ENCODE measurements at regions of chr14 and their contacts with region 1.

Region 1: GRCh38 chr14:59189786-59190771 is 1.6 kb downstream of the DAAM1 start:
- DNase-seq: peak; percentile 80
- H3K4me3 ChIP-seq: peak overlapping the region; percentile 77 to 85 (median 78)
- H3K27ac ChIP-seq: peak overlapping the region; percentile 72
- H3K4me1 ChIP-seq: peaks cover 13% of the 10 kb centered on the region
- H3K27me3 ChIP-seq: peaks cover 11 to 24% of the 10 kb centered on the region in 2 experiments
- CTCF ChIP-seq: no peak
- POLR2A ChIP-seq: no peak

Region 2: GRCh38 chr14:59126710-59127432 is 63.2 kb before region 1 on chr14:
- CTCF ChIA-PET with region 1: interaction called, 4 read pairs
- POLR2A ChIA-PET with region 1: no interaction called
- dilution Hi-C with region 1: no loop called
- intact Hi-C with region 1: loop called (anchors 2 kb)
- DNase-seq: peak; percentile 64
- H3K4me3 ChIP-seq: no peak overlapping the region
- H3K27ac ChIP-seq: no peak overlapping the region
- H3K4me1 ChIP-seq: no peaks in the 10 kb centered on the region
- H3K27me3 ChIP-seq: peaks cover 5 to 6% of the 10 kb centered on the region in 2 experiments
- CTCF ChIP-seq: peak; percentile 58 to 60
- POLR2A ChIP-seq: no peak

Region 3: DNA sequence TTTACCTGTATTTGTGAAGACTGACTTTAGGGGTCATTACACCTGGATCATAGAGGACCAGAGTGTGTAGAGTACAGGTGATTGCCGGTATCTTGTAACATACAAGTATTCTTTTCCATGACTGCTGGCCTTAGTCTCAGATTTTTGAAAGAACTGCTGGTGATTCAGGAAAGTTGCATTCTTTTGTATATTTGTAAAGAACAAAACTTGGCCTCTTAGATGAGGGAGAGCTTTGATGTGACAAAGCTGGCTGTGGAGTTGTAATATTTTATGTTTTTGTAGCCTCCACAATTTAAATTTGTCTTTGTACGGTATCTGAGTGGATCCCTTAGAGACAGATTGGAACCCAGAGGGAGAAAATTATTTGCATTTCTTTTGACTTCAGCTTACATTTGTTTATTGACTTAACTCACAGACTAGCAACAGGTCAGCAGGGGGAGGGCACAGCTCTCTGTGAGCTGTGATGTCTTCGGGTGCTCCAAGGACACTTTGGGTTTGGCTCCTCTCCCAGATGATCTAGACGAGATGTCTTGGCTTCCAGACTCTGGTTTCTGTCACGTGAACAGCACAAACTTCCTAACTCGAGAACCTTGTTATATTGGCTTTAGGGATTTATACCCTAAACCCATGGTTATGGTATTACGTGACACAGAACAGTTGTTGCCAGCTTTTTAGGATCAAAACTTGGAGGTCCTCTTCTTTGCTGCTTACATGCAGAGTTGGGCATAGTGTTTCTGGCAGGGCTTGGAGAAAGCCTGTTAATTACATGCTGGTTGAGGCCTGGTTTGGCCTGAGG is 64.3 kb after region 1 on chr14:
- CTCF ChIA-PET with region 1: no interaction called
- POLR2A ChIA-PET with region 1: no interaction called
- dilution Hi-C with region 1: no loop called
- intact Hi-C with region 1: loop called (anchors 2 kb)
- DNase-seq: peak; percentile 54
- H3K4me3 ChIP-seq: no peak overlapping the region
- H3K27ac ChIP-seq: peak overlapping the region; percentile 42
- H3K4me1 ChIP-seq: peaks cover 18% of the 10 kb centered on the region
- H3K27me3 ChIP-seq: no peaks in the 10 kb centered on the region
- CTCF ChIP-seq: no peak
- POLR2A ChIP-seq: no peak

Region 4: GRCh38 chr14:59337141-59337611 is 147.1 kb after region 1 on chr14:
- CTCF ChIA-PET with region 1: interaction called, 3 read pairs
- POLR2A ChIA-PET with region 1: no interaction called
- dilution Hi-C with region 1: no loop called
- intact Hi-C with region 1: loop called (anchors 2 kb)
- DNase-seq: peak; percentile 70
- H3K4me3 ChIP-seq: no peak overlapping the region
- H3K27ac ChIP-seq: peak overlapping the region; percentile 87
- H3K4me1 ChIP-seq: peaks cover 61% of the 10 kb centered on the region
- H3K27me3 ChIP-seq: no peaks in the 10 kb centered on the region
- CTCF ChIP-seq: no peak
- POLR2A ChIP-seq: no peak

Region 5: GRCh38 chr14:59428581-59429012 is 238.5 kb after region 1 on chr14:
- CTCF ChIA-PET with region 1: interaction called, 18 read pairs
- POLR2A ChIA-PET with region 1: no interaction called
- dilution Hi-C with region 1: no loop called
- intact Hi-C with region 1: no loop called
- DNase-seq: peak; percentile 53
- H3K4me3 ChIP-seq: no peak overlapping the region
- H3K27ac ChIP-seq: no peak overlapping the region
- H3K4me1 ChIP-seq: peaks cover 11% of the 10 kb centered on the region
- H3K27me3 ChIP-seq: no peaks in the 10 kb centered on the region
- CTCF ChIP-seq: peak; percentile 8 to 9
- POLR2A ChIP-seq: no peak

Measured in endothelial cell of umbilical vein (primary cell).